Right ventricle myocardium inferior (tissue), 1 donor: ENCODE measurements at regions of chr3 and their contacts with region 1.

Region 1: GRCh38 chr3:44323341-44323955 is 15.1 kb upstream of the TCAIM start:
- DNase-seq: peak; percentile 71
- ATAC-seq: no peak

Region 2: DNA sequence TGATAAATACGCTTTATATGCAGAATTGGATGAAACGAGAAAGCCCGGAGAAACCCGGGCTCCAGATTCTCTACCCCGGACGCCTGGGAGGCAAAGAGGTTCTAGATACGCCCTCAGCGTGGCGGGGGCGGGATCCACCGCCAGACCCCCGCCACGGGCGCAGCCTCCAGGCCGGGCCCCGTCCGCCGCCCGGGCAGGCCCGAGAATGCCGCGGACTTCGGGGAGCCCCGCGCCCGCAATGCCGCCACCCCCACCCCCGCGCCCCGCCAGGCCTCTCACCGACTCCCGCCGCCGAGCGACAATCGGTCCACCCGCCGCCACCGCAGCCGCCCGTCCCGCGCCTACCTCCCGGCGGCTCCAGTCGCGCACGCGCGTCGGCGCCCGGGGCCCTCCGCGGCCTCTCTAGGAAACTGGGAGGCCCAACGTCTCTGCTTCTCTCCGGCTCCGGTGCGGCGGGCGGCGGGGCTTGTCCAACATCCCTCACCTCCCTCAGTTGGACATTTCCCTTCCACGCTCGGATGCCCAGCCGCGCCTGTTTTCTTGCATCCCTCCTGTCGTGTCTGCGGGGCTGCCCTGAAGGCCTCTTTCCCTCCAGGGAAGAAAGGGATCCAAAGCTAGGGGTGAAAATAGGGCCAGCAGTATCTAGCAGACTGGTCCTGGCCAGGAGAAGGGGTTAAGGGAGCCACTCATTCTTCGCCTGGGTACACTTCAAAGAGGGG is 154.0 kb after region 1 on chr3 and contains the start of gene ZNF445:
- intact Hi-C with region 1: loop called (anchors 5 kb)
- DNase-seq: peak; percentile 94
- ATAC-seq: peak; percentile 97
- total RNA-seq, gene ZNF445: 12.7 TPM

Region 3: GRCh38 chr3:44510000-44510368 is 186.5 kb after region 1 on chr3:
- intact Hi-C with region 1: loop called (anchors 5 kb)
- DNase-seq: no peak
- ATAC-seq: no peak

Region 4: DNA sequence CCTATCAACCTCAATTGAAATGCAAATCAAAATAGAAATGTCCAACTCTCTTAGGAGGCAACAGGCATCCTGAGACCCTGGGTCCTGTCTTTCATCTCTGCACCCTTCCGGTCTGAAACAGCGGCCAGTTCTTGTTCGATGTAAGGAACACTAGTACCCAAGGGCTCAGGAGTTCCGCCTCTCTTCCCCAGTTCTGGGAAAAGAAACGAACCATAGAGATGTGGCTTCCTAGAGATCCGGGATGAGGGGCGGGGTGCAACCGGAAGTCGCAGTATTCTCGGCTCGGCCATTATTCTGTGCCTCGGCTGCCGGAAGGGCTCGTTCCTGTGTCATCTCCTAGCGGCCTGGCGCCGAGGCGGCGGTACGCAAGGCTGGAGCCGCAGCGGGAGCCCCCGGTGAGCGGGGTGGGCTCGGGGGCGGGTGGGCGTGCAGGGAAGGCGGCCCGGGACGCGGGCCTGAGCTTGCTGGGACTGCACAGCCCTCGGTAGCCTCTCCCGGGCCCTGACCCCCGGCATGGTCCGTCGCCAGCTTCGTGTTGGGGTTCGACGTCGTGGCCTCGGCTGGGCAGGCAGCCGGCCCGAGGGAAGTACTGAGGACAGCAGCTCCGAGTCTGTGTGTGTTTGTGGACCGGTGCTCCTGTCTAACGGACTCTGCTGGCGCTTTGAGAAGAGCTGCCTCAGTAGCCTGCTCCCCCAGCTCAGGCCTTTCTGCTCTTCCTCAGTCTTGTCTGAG is 301.5 kb after region 1 on chr3 and contains the start of gene ZNF197:
- intact Hi-C with region 1: loop called (anchors 10 kb)
- DNase-seq: peak; percentile 89
- ATAC-seq: peak; percentile 98
- total RNA-seq, gene ZNF197: 12.1 TPM

Region 5: DNA sequence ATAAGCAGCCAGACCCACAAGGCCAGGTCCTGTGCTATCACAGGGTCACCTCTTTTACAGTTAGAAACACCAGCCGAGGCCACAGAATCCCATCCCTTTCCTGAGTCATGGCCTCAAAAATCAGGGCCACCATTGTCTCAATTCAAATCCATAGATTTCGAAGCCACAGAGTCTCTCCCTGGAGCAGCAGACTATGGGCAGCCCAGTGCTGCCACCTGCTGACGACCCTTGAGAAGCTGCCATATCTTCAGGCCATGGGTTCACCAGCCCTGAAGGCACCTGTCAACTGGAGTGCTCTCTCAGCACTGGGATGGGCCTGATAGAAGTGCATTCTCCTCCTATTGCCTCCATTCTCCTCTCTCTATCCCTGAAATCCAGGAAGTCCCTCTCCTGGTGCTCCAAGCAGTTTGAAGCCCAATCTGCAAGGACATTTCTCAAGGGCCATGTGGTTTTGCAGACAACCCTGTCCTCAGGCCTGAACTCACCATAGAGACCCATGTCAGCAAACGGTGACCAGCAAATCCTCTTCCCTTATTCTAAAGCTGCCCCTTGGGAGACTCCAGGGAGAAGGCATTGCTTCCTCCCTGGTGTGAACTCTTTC is 590.5 kb after region 1 on chr3:
- intact Hi-C with region 1: loop called (anchors 5 kb)
- DNase-seq: peak; percentile 78
- ATAC-seq: peak; percentile 61

Region 6: DNA sequence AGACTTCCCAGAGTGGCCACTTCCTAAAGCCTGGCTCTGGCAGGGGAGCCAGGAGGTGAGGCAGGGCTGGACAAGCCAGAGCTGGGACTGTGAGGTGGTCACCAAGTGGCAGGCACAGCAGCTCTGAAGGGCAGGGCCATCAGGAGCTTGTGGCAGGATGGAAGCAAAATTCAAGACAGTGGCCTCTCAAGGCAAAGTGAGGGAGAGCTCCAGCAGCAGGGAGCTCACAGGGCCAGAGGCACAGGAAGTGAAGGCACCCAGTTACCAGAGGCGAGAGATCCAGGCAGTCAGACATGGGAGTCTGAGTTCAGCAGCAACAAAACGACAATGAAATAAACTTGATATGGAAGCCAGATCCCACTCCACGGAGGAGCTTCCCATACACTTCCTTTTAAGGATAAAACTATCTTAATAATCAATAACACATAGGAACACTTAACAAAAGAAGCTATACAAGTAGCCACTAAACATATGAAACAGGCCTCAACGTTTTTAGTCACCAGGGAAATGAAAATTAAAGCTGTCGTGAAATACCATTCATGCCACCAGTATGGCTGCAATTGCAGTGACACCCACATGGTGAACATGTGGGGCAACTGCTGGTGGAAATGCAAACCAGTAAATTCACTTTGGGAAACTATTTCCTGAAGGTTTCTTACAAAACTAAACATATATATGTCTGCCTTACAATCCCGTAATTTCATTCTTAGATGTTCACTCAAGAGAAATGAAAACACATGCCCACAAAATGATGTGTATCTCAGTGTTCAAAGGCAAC is 938.1 kb after region 1 on chr3:
- intact Hi-C with region 1: no loop called
- DNase-seq: no peak
- ATAC-seq: no peak